Gastrocnemius medialis (tissue), 4 donors: ENCODE measurements at regions of chr2 and their contacts with region 1.

Region 1: DNA sequence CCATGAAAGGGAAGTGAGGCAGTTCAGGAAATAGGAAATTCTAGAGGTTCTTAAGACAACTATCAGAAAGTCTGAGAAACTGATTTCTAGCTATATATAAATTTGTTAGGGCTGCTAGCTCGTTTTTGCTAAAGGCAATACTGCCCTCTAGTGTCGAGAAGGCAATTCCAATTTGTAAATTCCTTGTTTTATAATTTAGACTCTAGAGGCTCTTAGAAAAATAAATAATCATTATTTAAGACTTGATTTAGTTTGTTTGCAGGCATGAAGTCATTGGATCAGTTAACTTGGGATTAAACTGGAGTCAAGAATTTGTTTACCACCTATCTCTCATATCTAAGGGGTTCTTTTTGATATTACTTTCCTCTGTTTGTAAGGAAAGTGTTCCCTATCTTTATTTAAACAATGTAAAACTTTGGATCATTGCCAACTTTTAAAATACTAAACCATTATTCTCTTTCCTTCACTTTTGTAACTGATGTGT is 66.2 kb downstream of the ACVR2A start:
- DNase-seq: no peak
- ATAC-seq: peak; percentile 33 to 61
- H3K4me3 ChIP-seq: no peak overlapping the region
- H3K27ac ChIP-seq: no peak overlapping the region
- H3K4me1 ChIP-seq: peaks cover 7 to 23% of the 10 kb centered on the region in 2 donors
- H3K27me3 ChIP-seq: no peaks in the 10 kb centered on the region
- CTCF ChIP-seq: peak; percentile 68 to 89 (median 84)
- POLR2A ChIP-seq: no peak

Region 2: DNA sequence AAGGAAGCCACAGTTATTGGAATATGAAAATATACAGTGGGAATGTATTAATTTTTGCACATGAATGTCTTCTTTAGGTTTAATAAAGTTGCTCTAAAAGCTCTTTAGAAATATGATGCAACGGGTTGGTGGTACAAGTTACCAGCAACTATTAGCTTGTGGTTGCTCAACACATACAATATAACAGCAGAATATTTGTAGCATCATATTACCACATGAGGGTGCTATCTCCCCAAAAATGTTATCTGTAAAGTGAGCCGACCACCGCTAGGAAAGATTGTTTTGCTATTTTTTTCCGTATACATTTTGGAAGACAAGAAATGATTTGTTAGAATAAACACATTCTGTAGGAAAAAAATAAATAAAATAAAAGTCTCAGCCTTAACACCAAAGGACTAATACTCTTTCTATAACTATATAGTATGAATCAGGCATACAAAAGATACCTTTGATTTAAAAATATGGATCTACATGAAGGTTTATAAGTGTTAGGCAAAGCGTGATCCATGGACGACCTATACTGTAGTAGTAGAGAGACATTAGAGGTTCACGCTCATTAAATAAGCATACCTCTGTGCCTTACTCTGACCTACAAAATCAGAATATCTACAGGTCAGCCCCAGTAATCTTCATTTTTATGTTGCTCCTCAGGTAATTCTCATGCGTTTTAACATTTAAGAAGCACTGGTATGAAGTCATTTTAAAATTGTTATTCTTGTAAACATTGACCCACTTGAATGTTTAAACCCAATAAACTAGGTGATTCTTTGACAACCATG is 1176.8 kb before region 1 on chr2:
- in situ Hi-C with region 1: loop called in 2 of 4 experiments (anchors 25 kb)
- intact Hi-C with region 1: loop called (anchors 2 kb)
- DNase-seq: no peak
- ATAC-seq: peak; percentile 85 to 94
- H3K4me3 ChIP-seq: no peak overlapping the region
- H3K27ac ChIP-seq: no peak overlapping the region
- H3K4me1 ChIP-seq: peaks cover 0 to 5% of the 10 kb centered on the region in 2 donors
- H3K27me3 ChIP-seq: no peaks in the 10 kb centered on the region
- CTCF ChIP-seq: peak in 4 of 5 experiments; percentile 24 to 59 (median 42)
- POLR2A ChIP-seq: no peak

Region 3: DNA sequence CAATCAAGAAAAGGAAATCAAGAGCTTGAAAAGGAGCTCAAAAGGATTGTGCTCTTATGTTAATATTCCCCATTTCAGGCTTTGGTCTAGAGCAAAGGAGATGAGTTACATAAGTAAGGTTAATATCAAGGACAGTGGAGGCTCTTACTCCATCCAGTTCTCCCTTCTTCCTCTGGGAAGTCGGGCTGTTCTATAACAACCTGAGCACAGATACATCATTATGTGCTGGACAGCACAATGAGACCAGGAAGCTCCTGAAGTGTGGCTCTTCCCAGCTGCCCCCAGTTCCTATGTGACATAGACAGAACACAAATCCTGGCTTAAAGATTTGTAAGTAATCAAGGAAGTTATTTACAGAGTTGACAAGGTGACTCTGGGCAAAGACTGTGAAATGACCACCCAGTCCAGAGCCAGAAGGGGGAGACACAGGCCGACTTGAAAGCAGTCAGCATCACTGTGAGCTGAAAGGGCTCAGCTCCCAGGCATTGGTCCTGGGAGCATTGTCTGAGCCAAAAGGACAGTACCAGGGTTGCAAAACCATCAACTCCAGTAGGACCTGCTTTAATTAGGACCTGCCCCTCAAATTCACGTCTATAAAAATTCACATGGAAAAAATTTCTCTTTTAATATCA is 983.8 kb before region 1 on chr2:
- in situ Hi-C with region 1: loop called in 1 of 4 experiments (anchors 10 kb)
- intact Hi-C with region 1: loop called (anchors 10 kb)
- DNase-seq: peak; percentile 10 to 36
- ATAC-seq: peak; percentile 39 to 60
- H3K4me3 ChIP-seq: no peak overlapping the region
- H3K27ac ChIP-seq: no peak overlapping the region
- H3K4me1 ChIP-seq: no peaks in the 10 kb centered on the region
- H3K27me3 ChIP-seq: no peaks in the 10 kb centered on the region
- CTCF ChIP-seq: peak in 2 of 5 experiments; percentile 31
- POLR2A ChIP-seq: no peak

Region 4: GRCh38 chr2:147082850-147083522 is 828.0 kb before region 1 on chr2:
- in situ Hi-C with region 1: loop called (anchors 5 to 25 kb)
- intact Hi-C with region 1: loop called (anchors 2 kb)
- DNase-seq: peak; percentile 9 to 20
- ATAC-seq: peak; percentile 68 to 74
- H3K4me3 ChIP-seq: no peak overlapping the region
- H3K27ac ChIP-seq: peak overlapping the region in 2 of 4 donors; percentile 0 to 50
- H3K4me1 ChIP-seq: no peaks in the 10 kb centered on the region
- H3K27me3 ChIP-seq: no peaks in the 10 kb centered on the region
- CTCF ChIP-seq: peak; percentile 72 to 88 (median 86)
- POLR2A ChIP-seq: no peak

Region 5: GRCh38 chr2:147525819-147526489 is 385.1 kb before region 1 on chr2:
- in situ Hi-C with region 1: loop called in 1 of 4 experiments (anchors 25 kb)
- intact Hi-C with region 1: no loop called
- DNase-seq: no peak
- ATAC-seq: no peak
- H3K4me3 ChIP-seq: no peak overlapping the region
- H3K27ac ChIP-seq: no peak overlapping the region
- H3K4me1 ChIP-seq: peaks cover 0 to 12% of the 10 kb centered on the region in 2 donors
- H3K27me3 ChIP-seq: no peaks in the 10 kb centered on the region
- CTCF ChIP-seq: no peak
- POLR2A ChIP-seq: no peak